Heart right ventricle (tissue), 16 donors: ENCODE measurements at regions of chr7 and their contacts with region 1.

Region 1: GRCh38 chr7:37284805-37285231 is 163.8 kb downstream of the ELMO1 start:
- DNase-seq: peak; percentile 54 to 61
- ATAC-seq: peak in 6 of 8 donors; percentile 14 to 67 (median 52)
- H3K4me3 ChIP-seq: no peak overlapping the region
- H3K27ac ChIP-seq: peak overlapping the region in 7 of 10 donors; percentile 13 to 45 (median 19)
- H3K4me1 ChIP-seq: peaks cover 4 to 78% (median 56%) of the 10 kb centered on the region in 9 donors
- H3K27me3 ChIP-seq: no peaks in the 10 kb centered on the region
- CTCF ChIP-seq: peak; percentile 59 to 84 (median 77)

Region 2: DNA sequence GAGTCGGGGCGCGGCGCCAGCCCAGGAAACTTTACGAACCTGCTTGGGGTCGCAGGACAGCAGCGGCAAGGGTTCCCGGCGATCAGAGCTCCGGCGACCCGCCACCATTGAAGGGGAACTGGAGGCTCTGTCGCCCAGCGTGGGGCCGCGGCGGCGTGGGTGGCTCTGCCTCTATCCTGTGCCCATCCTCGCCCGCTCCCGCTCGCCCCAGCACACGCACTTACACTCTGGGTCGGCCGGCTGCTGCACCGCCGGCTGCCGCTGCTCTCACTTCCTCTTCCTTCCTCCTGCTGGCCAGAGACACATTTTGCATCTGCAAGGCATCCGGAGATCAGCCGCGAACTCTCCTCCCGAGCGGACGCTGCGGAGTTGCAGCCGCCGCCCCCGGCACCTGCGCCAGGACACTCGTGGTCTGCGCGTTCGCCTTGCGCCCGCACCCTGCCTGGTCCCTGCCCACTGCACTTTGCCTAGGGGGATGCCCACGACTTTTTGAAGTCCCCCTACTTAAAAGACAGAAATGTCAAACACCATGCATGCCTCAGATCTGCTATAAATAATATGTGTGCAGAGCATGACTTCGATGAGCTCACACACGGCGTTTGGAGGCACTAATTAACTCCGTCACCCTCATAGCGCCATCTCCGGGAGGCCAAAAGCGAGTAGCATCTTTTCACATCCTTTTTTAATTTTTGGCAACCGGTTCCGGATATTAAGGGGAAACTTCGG is 164.0 kb after region 1 on chr7 and contains the start of gene ELMO1:
- intact Hi-C with region 1: loop called in 6 of 10 experiments (anchors 1 to 10 kb)
- DNase-seq: peak; percentile 76 to 79
- ATAC-seq: peak; percentile 77 to 89 (median 85)
- H3K4me3 ChIP-seq: peak within 1 kb of the TSS; percentile 59 to 86 (median 78)
- H3K27ac ChIP-seq: peak within 1 kb of the TSS; percentile 82 to 98 (median 94)
- H3K4me1 ChIP-seq: peaks cover 0 to 47% (median 20%) of the 10 kb centered on the region in 9 donors
- H3K27me3 ChIP-seq: peaks cover 0 to 22% (median 0%) of the 10 kb centered on the region in 7 donors
- CTCF ChIP-seq: peak in 8 of 9 donors; percentile 20 to 63 (median 51)
- total RNA-seq, gene ELMO1: 8.8 to 18.0 (median 14.0) TPM

Region 3: GRCh38 chr7:37495574-37496184 is 210.9 kb after region 1 on chr7:
- intact Hi-C with region 1: loop called in 9 of 10 experiments (anchors 5 to 10 kb)
- DNase-seq: no peak
- ATAC-seq: peak in 1 of 8 donors; percentile 37
- H3K4me3 ChIP-seq: no peak overlapping the region
- H3K27ac ChIP-seq: no peak overlapping the region
- H3K4me1 ChIP-seq: no peaks in the 10 kb centered on the region
- H3K27me3 ChIP-seq: no peaks in the 10 kb centered on the region
- CTCF ChIP-seq: peak; percentile 72 to 86 (median 78)

Region 4: DNA sequence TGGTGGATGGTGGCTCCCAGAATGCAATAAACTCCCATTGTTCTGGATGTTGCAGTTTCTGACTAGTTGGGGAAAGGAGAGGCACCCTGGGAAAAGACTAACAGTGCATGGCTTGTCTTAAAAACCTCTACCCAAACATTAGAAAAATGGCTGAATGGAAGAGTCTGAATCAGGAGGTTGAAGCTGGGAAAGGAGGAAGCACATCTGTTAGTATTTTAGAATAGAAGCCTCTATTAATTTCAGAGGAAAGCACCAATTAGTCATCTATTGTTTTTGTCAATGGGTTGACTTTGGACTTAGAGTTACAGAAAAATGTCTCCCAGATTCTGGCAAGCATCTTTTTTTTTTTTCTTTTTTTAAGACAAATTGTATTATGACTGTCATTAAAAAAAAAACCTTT is 220.0 kb after region 1 on chr7:
- intact Hi-C with region 1: loop called in 1 of 10 experiments (anchors 5 kb)
- DNase-seq: no peak
- ATAC-seq: peak in 4 of 8 donors; percentile 35 to 64 (median 60)
- H3K4me3 ChIP-seq: no peak overlapping the region
- H3K27ac ChIP-seq: peak overlapping the region in 1 of 10 donors; percentile 32
- H3K4me1 ChIP-seq: peaks cover 0 to 21% (median 0%) of the 10 kb centered on the region in 9 donors
- H3K27me3 ChIP-seq: no peaks in the 10 kb centered on the region
- CTCF ChIP-seq: no peak